Tibial artery (tissue), 4 donors: ENCODE measurements at regions of chr12 and their contacts with region 1.

Region 1: GRCh38 chr12:26126340-26127284 is 1.8 kb upstream of the BHLHE41 start:
- DNase-seq: peak; percentile 86 to 95
- H3K4me3 ChIP-seq: peak overlapping the region; percentile 68 to 72
- H3K27ac ChIP-seq: peak overlapping the region; percentile 96 to 99
- H3K4me1 ChIP-seq: peaks cover 0 to 12% (median 8%) of the 10 kb centered on the region in 4 donors
- H3K27me3 ChIP-seq: no peaks in the 10 kb centered on the region
- CTCF ChIP-seq: no peak

Region 2: DNA sequence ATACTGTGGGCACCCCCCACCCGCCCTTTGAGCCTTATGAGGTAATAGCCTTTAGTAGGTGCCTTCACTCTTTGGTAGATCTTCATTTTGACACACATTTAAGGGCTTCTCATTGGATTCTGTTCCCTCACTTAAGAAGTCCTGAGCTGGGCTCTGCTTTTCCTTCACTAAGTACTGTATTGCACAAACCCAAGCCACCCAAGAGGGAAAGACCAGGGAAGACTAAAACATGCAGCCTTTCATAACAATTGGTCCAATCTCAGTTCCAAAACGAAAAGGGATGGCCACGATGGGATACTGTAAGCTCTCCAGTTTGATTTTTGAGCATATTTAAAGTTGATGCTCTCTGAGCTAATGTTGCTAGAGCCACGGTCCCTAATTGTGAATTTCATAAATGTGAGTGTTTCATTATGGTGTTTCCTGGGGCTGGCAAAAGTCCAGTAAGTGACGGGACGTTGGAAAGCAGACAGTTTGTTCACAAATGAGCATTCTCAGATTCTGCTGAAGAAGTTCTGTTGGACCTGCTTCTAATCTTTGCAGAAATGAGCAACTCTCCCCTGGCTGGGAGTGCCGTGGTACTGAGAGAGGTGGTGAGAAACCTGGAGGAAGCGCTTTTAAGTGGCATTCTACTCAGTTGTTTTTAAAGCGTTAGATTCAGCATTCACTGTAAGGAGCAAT is 78.1 kb after region 1 on chr12:
- intact Hi-C with region 1: loop called (anchors 5 kb)
- DNase-seq: peak in 1 of 2 donors; percentile 46
- H3K4me3 ChIP-seq: peak overlapping the region; percentile 2 to 12
- H3K27ac ChIP-seq: peak overlapping the region in 1 of 2 donors; percentile 36
- H3K4me1 ChIP-seq: peaks cover 0 to 29% (median 4%) of the 10 kb centered on the region in 4 donors
- H3K27me3 ChIP-seq: no peaks in the 10 kb centered on the region
- CTCF ChIP-seq: no peak

Region 3: DNA sequence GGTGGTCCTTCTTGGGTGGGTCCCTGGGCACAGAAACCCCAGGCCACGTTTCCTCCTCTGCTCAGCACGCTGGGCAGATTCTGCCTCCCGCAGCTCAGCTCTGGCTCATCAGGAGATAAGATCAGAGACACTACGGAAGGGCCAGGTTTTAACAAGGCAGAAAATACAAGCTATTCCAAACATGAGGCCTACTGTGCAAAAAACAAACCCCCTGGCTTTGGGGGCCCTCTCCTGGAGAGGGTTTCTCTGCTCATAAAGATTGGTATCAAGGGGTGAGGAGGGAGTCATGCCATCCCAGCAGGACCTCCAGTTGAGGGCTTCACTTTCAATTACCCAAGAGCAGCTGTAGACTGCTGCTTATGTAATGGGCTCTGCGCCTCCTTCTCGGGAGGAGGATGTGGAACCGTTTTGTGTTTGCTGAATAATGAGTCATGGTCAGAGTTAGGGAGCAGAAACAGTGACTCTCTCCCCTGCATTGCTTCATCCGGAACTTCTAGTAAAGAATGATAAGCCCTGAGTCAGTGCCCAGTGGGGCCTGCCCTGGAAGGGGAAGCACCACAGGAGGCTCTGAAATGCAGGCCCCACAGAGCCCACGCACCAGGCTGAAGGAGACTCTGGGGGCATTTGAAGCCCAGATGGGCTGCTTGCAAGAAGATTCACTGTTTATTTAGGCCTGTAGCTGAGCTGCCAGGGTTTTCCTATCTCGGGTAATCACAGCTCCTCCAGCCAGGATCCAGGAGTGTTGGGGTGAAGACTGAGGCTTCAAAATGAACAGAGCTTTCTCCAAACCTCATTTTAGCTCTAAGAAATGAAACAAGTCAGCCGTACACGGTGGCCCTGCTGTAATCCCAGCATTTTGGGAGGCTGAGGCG is 148.1 kb after region 1 on chr12:
- intact Hi-C with region 1: loop called (anchors 5 kb)
- DNase-seq: peak; percentile 93 to 94
- H3K4me3 ChIP-seq: no peak overlapping the region
- H3K27ac ChIP-seq: peak overlapping the region; percentile 67 to 85
- H3K4me1 ChIP-seq: peaks cover 0 to 43% (median 37%) of the 10 kb centered on the region in 4 donors
- H3K27me3 ChIP-seq: no peaks in the 10 kb centered on the region
- CTCF ChIP-seq: no peak